ENCODE measurements at regions of chr16 and their contacts with region 1.

Region 1: GRCh38 chr16:71883849-71884638 is at the start of gene ZNF821:
- DNase-seq: peak; percentile 93
- ATAC-seq: peak; percentile 92
- H3K4me3 Mint-ChIP-seq: peak within 1 kb of the TSS; percentile 92
- H3K27ac Mint-ChIP-seq: peak within 1 kb of the TSS; percentile 96
- H3K4me1 Mint-ChIP-seq: peaks cover 37% of the 10 kb centered on the region
- H3K27me3 Mint-ChIP-seq: no peaks in the 10 kb centered on the region
- CTCF ChIP-seq: no peak
- total RNA-seq, gene ZNF821: 14.1 to 16.2 TPM (median 15.4 TPM) in 3 replicates

Region 2: GRCh38 chr16:71738855-71739254 is 145.2 kb before region 1 on chr16:
- CTCF ChIA-PET with region 1: no interaction called
- POLR2A ChIA-PET with region 1: no interaction called
- DNase-seq: no peak
- ATAC-seq: no peak
- H3K4me3 Mint-ChIP-seq: no peak overlapping the region
- H3K27ac Mint-ChIP-seq: no peak overlapping the region
- H3K4me1 Mint-ChIP-seq: no peaks in the 10 kb centered on the region
- H3K27me3 Mint-ChIP-seq: no peaks in the 10 kb centered on the region
- CTCF ChIP-seq: no peak

Region 3: GRCh38 chr16:71826533-71827017 is 57.5 kb before region 1 on chr16:
- CTCF ChIA-PET with region 1: no interaction called
- POLR2A ChIA-PET with region 1: no interaction called
- DNase-seq: no peak
- ATAC-seq: no peak
- H3K4me3 Mint-ChIP-seq: no peak overlapping the region
- H3K27ac Mint-ChIP-seq: no peak overlapping the region
- H3K4me1 Mint-ChIP-seq: no peaks in the 10 kb centered on the region
- H3K27me3 Mint-ChIP-seq: peaks cover 10% of the 10 kb centered on the region
- CTCF ChIP-seq: no peak

Region 4: DNA sequence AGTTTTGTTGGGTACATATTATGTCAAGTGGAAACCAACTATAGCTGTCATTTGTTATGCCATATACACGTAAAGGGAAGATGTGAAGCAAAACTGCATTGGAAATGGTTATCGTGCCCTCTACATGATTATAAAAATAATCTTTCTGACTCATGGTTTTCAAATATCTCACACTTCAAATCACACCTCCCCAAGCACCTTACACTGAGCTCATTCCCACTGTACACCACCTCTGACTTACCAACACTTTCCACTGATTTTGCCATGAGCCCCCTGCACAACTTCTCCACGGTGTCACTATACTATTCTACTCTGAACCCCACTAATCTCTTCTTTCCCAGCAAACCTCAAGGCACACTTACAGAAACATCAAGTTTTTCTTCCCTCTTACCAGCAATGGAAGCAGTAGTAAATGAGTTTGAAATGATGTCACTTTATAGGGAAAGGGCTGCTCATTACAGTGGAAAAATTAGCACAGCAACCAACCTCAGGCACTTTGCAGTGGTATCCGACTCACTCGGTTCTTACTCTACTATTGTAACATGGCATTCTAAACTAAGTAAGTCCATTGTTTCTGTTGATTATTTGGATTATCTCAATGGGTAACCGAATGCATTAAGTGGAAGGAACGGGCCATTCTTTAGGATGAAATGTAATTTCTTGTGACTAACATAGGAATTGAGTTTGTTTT is 18.7 kb before region 1 on chr16:
- CTCF ChIA-PET with region 1: interaction called, 13 read pairs
- POLR2A ChIA-PET with region 1: interaction called, 5 read pairs
- DNase-seq: no peak
- ATAC-seq: no peak
- H3K4me3 Mint-ChIP-seq: no peak overlapping the region
- H3K27ac Mint-ChIP-seq: no peak overlapping the region
- H3K4me1 Mint-ChIP-seq: peaks cover 10% of the 10 kb centered on the region
- H3K27me3 Mint-ChIP-seq: no peaks in the 10 kb centered on the region
- CTCF ChIP-seq: no peak

Region 5: DNA sequence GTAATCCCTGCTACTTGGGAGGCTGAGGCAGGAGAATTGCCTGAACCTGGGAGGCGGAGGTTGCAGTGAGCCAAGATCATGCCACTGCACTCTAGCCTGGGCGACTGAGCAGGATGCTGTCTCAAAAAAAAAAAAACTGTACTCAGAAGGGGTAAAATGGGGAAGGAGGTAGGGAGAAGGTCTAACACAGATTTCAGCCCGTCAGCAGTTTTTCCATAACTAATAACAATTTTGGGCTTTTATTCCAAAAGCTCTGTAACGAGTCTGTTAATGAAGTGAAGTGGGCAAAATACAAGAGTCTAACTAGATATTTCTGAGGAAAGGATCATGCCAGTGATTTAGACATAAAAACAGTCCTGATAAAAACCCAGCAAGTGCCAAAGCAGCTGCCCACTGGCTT is 10.8 kb before region 1 on chr16:
- CTCF ChIA-PET with region 1: interaction called, 15 read pairs
- POLR2A ChIA-PET with region 1: interaction called, 5 read pairs
- DNase-seq: no peak
- ATAC-seq: no peak
- H3K4me3 Mint-ChIP-seq: no peak overlapping the region
- H3K27ac Mint-ChIP-seq: no peak overlapping the region
- H3K4me1 Mint-ChIP-seq: peaks cover 5% of the 10 kb centered on the region
- H3K27me3 Mint-ChIP-seq: no peaks in the 10 kb centered on the region
- CTCF ChIP-seq: no peak

Region 6: GRCh38 chr16:71894921-71895678 is 11.1 kb after region 1 on chr16 and contains the start of gene IST1:
- CTCF ChIA-PET with region 1: interaction called, 27 read pairs
- POLR2A ChIA-PET with region 1: interaction called, 17 read pairs
- DNase-seq: peak; percentile 97
- ATAC-seq: peak; percentile 80
- H3K4me3 Mint-ChIP-seq: peak within 1 kb of the TSS; percentile 98
- H3K27ac Mint-ChIP-seq: peak within 1 kb of the TSS; percentile 97
- H3K4me1 Mint-ChIP-seq: peaks cover 24% of the 10 kb centered on the region
- H3K27me3 Mint-ChIP-seq: no peaks in the 10 kb centered on the region
- CTCF ChIP-seq: no peak
- total RNA-seq, gene IST1: 255 to 272 TPM (median 268 TPM) in 3 replicates

Region 7: GRCh38 chr16:71912534-71913253 is 28.6 kb after region 1 on chr16:
- CTCF ChIA-PET with region 1: interaction called, 17 read pairs
- POLR2A ChIA-PET with region 1: no interaction called
- DNase-seq: no peak
- ATAC-seq: no peak
- H3K4me3 Mint-ChIP-seq: no peak overlapping the region; the same call in 1 of the 2 replicates
- H3K27ac Mint-ChIP-seq: peak overlapping the region; percentile 57
- H3K4me1 Mint-ChIP-seq: peaks cover 37% of the 10 kb centered on the region
- H3K27me3 Mint-ChIP-seq: no peaks in the 10 kb centered on the region
- CTCF ChIP-seq: no peak

Measured in WTC11 (cell line).